ENCODE measurements at regions of chr22 and their contacts with region 1.

Region 1: GRCh38 chr22:22935546-22936157 is 48.0 kb downstream of the IGLL5 start:
- DNase-seq: no peak
- H3K4me3 ChIP-seq: no peak overlapping the region
- H3K27ac ChIP-seq: no peak overlapping the region
- H3K4me1 ChIP-seq: no peaks in the 10 kb centered on the region
- H3K27me3 ChIP-seq: no peaks in the 10 kb centered on the region
- CTCF ChIP-seq: no peak

Region 2: DNA sequence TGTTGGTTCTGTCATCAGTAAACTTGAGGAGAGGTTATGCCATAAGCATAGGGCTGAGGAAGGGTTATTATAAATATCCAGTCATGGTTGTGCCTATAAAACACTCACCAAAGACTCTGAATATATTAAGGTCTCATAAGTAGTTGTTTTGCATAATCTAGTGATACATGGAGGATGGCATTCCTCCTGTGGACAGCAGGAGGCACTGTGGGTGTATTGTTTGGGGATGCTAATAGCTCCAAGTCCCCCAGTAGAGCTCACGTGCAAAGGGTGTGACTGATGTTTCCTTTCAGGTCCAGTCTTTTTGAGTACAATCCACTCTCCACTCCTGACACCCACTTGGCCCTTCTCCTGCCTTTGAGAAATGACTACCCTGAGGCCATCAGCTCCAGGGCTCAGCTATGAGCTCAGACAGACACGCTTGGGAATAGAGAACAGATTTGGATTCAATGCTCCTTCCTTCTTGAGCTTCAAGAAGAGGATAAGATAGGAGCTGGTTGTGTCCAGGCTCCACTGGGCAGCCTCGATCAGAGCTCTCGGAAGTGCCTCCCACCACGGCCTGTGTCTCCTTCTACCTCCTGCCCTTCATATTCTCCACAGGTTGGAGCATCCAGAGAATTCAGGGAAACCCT is 133.2 kb before region 1 on chr22:
- CTCF ChIA-PET with region 1: no interaction called
- dilution Hi-C with region 1: no loop called
- in situ Hi-C with region 1: no loop called
- intact Hi-C with region 1: no loop called
- DNase-seq: no peak
- H3K4me3 ChIP-seq: no peak overlapping the region
- H3K27ac ChIP-seq: no peak overlapping the region
- H3K4me1 ChIP-seq: no peaks in the 10 kb centered on the region
- H3K27me3 ChIP-seq: no peaks in the 10 kb centered on the region
- CTCF ChIP-seq: peak; percentile 10 to 19

Region 3: GRCh38 chr22:23113067-23113846 is 177.6 kb after region 1 on chr22:
- CTCF ChIA-PET with region 1: no interaction called
- dilution Hi-C with region 1: loop called (anchors 5 kb)
- in situ Hi-C with region 1: no loop called
- intact Hi-C with region 1: no loop called
- DNase-seq: no peak
- H3K4me3 ChIP-seq: no peak overlapping the region
- H3K27ac ChIP-seq: no peak overlapping the region
- H3K4me1 ChIP-seq: no peaks in the 10 kb centered on the region
- H3K27me3 ChIP-seq: no peaks in the 10 kb centered on the region
- CTCF ChIP-seq: no peak